Activated T-helper 1 cell treated with anti-CD3 and anti-CD28 coated beads, Interleukin-12 subunit alpha, Interleukin-12 subunit beta, Interleukin-2, Interleukin-4 antibody, amounts not matched to agents 30 ng/mL and 10 ng/mL and 1 ng/mL, durations not matched to agents 14 hours and 24 hours and 36 hours (primary cell): ENCODE measurements at regions of chr2 and their contacts with region 1.

Region 1: GRCh38 chr2:84516234-84516986 is at the start of gene DNAH6:
- DNase-seq: peak; percentile 84
- H3K4me3 Mint-ChIP-seq: peak within 1 kb of the TSS; percentile 82
- H3K27ac Mint-ChIP-seq: peak within 1 kb of the TSS; percentile 68
- H3K4me1 Mint-ChIP-seq: peaks cover 27% of the 10 kb centered on the region
- H3K27me3 Mint-ChIP-seq: peaks cover 26% of the 10 kb centered on the region
- total RNA-seq, gene DNAH6: 0.12 and 0.16 TPM in 2 replicates

Region 2: DNA sequence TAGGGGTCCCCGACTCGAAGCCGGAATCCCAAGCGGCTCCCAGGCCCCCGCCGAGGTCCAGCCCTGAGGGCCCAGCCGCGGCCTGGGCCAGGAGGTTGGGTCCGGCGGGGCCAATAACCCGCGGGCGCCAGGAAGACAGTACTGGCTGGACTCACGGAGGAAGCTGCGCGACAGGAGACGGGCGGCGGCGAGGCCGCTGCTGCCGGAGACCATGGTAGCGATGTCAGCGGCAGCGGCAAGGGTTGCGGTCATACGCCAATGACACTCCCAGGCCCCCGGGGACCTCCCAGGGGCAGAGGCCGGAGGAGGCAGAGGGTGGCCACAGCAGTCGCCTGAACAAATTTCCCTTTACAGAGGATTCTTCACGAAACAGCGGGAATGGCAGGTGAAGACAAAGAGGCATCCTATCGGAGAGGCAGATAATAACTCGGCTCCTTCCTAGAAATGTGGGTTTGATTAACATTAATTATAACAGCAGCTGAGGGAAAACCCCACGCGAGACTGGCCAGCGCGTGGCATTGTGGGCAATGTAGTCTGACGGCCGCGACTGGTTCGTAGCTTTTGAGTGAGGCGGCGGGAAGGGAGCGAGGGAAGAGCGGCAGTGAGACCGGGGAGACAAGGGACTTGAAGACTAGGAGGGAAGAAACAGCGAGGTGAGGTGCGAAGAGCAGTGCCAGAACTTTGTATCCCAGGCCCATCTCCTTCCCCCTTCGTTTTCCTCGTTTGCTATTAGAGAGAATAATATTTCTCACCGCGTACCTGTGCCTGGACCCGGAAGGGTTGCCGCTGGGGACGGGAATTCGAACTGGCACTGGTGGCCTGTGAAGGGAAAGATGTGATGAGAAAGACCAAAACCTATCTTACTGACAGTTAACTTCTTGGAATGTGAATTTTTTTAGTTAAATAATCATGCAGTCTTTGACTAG is 57.1 kb before region 1 on chr2 and contains the start of gene SUCLG1:
- intact Hi-C with region 1: loop called (anchors 1 kb)
- DNase-seq: peak; percentile 82
- H3K4me3 Mint-ChIP-seq: peak within 1 kb of the TSS; percentile 94
- H3K27ac Mint-ChIP-seq: peak within 1 kb of the TSS; percentile 97
- H3K4me1 Mint-ChIP-seq: peaks cover 52% of the 10 kb centered on the region
- H3K27me3 Mint-ChIP-seq: no peaks in the 10 kb centered on the region
- total RNA-seq, gene SUCLG1: 66.6 and 73.0 TPM in 2 replicates

Region 3: DNA sequence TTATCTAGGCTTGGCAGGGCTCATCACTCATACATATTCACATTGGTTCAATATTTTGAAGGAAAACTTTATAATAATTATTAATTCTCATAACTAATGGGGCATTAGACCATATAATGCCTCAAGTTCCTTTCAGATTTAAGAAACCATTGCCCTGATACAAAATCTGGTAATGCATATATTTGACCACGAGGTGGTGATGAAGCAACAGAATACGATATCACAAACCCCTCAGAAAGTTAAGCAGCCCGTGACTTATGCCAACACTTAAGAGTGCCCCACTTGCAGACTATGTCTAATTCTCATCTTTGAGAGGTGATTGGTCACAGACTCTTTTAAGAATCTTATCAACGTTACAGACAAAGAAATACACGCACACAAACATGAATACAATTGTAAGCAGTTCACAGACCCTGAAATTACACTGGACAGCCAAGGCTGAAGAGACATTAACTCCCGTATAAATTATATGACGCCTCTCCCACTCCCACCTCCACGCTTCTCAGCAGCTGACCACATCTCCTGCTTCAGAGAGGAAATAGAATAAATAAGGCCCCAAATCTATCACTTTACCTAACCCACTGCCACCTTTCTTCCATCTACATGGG is 20.8 kb before region 1 on chr2:
- intact Hi-C with region 1: loop called (anchors 1 kb)
- DNase-seq: peak; percentile 16
- H3K4me3 Mint-ChIP-seq: no peak overlapping the region
- H3K27ac Mint-ChIP-seq: no peak overlapping the region
- H3K4me1 Mint-ChIP-seq: peaks cover 7% of the 10 kb centered on the region
- H3K27me3 Mint-ChIP-seq: no peaks in the 10 kb centered on the region

Region 4: DNA sequence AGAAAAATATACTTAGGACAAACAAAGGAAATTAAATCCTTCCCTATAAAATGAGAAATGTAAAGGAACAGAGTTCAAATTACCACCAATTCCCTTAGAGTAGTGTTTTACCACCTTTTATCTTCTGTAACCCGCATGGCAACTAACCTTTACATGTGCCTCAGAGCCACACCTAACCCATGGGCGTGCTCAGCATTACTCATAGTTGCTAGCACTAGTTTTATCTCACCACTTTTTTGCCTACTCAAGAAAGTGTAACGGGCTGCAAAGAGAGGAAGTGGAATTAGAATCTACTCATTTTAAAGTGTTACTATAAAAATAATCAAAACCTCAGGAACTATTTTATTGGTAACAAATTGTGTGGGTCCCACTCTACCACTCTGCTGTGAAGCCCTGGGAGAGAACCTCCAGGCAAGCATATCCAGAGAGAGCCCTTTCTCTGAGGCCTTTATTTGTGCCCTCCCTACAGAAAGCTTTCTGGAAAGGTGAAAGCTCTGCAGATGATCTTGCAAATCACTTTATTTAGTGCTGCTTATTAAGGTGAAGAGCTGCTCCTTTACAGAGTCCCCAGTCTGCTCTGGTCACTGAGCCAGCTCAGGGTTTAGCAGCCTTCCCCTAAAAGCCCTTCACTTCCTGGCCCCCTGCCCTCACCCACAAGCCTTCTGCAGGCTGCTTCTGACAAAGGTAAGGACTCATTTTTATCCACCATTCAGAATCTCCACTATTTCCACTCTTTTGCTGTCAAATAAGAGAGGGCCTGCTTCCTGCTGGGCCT is 265.7 kb after region 1 on chr2:
- intact Hi-C with region 1: loop called (anchors 2 kb)
- DNase-seq: peak; percentile 44
- H3K4me3 Mint-ChIP-seq: no peak overlapping the region
- H3K27ac Mint-ChIP-seq: peak overlapping the region; percentile 85
- H3K4me1 Mint-ChIP-seq: peaks cover 69% of the 10 kb centered on the region
- H3K27me3 Mint-ChIP-seq: no peaks in the 10 kb centered on the region

Region 5: DNA sequence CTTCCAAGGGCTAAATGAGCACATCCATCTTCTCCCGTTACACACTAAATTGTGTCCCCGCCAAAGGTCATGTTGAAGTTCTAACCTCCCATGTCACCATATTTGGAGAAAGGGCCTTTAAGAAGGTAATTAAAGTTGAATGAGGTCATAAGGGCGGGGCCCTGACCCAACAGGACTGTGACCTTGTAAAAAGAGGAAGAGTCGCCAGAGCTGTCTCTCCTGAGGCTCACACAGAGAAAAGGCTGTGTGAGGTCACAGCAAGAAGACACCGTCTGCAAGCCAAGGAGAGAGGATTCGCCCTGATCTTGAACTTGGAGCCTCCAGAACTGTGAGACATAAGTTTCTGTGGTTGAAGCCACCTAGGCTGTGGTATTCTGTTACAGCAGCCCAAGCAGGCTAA is 340.4 kb after region 1 on chr2:
- intact Hi-C with region 1: loop called (anchors 5 kb)
- DNase-seq: peak; percentile 33
- H3K4me3 Mint-ChIP-seq: peak overlapping the region; percentile 72
- H3K27ac Mint-ChIP-seq: peak overlapping the region; percentile 83
- H3K4me1 Mint-ChIP-seq: peaks cover 85% of the 10 kb centered on the region
- H3K27me3 Mint-ChIP-seq: no peaks in the 10 kb centered on the region